CD4-positive, alpha-beta T cell (primary cell): ENCODE measurements at regions of chr17 and their contacts with region 1.

Region 1: DNA sequence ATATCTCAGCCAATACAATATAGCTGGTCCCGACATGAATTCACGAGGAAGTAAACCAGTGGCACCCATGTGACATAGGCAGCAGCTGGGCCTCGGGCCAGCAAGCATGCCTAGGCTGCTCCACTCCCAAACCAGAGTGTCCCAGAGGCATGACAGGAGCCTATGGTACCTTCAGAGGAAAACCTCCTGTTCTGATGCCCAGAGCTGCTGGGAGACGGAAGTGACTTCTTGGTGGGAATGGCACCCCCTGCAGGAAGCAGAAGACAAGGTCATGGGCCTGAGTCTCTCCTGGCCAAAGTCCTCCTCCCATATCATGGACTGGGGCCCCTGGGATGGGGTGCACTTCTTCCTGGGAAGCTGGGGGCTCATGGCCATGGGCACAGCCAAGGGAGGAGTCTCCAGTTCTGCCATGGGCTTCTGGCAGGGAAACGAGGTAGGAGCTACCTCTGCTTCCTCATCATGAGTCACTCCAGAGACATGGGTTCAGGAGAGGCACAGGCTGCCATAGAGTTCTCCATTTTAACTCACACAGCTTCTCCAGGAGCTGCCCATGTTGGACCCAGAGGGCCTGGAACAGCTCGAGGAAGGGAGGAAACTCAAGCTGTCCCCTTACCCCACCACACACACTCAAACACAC is 13.4 kb downstream of the FBF1 start:
- DNase-seq: peak in 1 of 14 experiments; percentile 29
- ATAC-seq: no peak
- H3K4me3 ChIP-seq: no peak overlapping the region
- H3K4me3 Mint-ChIP-seq: no peak overlapping the region
- H3K27ac ChIP-seq: no peak overlapping the region
- H3K27ac Mint-ChIP-seq: no peak overlapping the region
- H3K4me1 ChIP-seq: no peaks in the 10 kb centered on the region
- H3K4me1 Mint-ChIP-seq: no peaks in the 10 kb centered on the region
- H3K27me3 ChIP-seq: no peaks in the 10 kb centered on the region
- H3K27me3 Mint-ChIP-seq: no peaks in the 10 kb centered on the region
- CTCF ChIP-seq: peak; percentile 22

Region 2: DNA sequence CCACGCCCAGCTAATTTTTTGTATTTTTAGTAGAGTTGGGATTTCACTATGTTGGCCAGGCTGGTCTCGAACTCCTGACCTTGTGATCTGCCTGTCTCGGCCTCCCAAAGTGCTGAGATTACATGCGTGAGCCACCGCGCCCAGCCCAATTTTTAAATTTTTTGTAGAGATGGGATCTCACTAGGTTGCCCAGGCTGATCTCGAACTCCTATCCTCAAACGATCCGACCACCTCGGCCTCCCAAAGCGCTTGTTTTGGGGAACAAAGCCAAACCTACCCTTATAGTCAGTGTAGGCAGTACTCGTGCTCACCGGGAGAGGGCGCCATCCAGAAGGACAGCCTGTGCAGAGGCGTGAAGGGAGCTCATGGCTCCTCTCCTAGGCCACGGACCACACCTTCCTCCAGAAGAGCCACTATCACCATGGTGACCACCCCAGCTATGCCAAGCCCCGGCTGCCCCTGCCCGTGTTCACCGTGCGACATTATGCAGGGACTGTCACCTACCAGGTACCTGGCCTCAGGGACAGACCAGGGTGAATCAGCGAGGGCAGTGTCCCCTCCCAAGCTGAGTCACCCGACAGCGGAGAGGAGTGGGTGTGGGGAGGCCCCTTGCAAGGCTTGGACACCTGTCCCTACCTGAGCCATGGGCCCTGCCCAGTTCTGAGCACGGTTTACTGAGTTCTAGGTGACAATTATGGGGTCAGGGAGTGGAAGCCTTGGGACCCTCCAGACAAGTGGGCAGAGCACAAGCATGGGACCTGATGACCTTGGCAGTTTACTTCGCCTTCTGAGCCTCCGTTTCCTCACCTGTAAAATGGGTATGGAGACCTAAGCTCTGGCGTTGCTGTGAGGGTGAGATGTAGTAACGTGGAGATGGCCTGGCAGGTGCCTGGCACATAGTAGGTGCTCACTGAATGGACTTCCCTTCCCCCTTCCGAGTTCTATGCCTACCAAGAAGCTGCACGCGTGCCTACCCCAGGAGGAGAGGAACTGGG is 326.1 kb before region 1 on chr17:
- CTCF ChIA-PET with region 1: no interaction called
- POLR2A ChIA-PET with region 1: no interaction called
- intact Hi-C with region 1: no loop called
- DNase-seq: peak; percentile 37 to 72 (median 54)
- ATAC-seq: peak; percentile 81
- H3K4me3 ChIP-seq: no peak overlapping the region
- H3K4me3 Mint-ChIP-seq: no peak overlapping the region
- H3K27ac ChIP-seq: no peak overlapping the region
- H3K27ac Mint-ChIP-seq: no peak overlapping the region
- H3K4me1 ChIP-seq: peaks cover 4% of the 10 kb centered on the region
- H3K4me1 Mint-ChIP-seq: no peaks in the 10 kb centered on the region
- H3K27me3 ChIP-seq: no peaks in the 10 kb centered on the region
- H3K27me3 Mint-ChIP-seq: no peaks in the 10 kb centered on the region
- CTCF ChIP-seq: peak; percentile 64

Region 3: DNA sequence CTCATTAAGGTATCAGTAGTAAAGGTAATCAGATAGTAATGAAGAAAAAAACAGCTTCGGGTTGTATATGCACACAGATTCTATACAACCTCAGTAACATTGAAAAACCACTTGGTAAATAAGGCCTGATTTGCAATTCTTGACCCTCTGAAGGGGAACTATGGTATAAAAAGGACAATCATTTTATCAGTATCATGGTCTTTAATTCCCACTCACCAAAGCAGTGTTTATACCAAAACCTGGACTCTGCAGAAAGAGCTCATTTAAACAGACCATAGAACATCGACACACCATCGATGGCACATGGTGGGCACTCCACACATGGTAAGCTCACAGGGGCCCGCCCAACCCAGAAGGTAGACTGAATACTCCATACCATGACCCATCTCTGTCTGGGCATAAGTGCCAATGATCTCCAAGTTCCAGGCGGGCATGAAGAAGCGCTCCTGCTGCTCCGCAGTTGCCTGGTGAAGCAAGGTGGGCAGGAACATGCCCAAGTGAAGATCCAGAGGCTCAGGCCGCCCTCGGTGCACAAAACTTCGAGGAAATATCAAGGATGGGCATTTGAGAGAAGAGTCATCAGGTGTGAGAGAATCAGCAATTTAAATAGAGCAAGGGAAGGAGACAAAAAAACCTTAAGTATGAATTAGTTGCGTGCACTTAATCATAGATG is 32.6 kb after region 1 on chr17:
- CTCF ChIA-PET with region 1: no interaction called
- POLR2A ChIA-PET with region 1: no interaction called
- intact Hi-C with region 1: loop called in 1 of 2 experiments (anchors 5 kb)
- DNase-seq: no peak
- ATAC-seq: no peak
- H3K4me3 ChIP-seq: no peak overlapping the region
- H3K4me3 Mint-ChIP-seq: no peak overlapping the region
- H3K27ac ChIP-seq: no peak overlapping the region
- H3K27ac Mint-ChIP-seq: no peak overlapping the region
- H3K4me1 ChIP-seq: no peaks in the 10 kb centered on the region
- H3K4me1 Mint-ChIP-seq: peaks cover 18% of the 10 kb centered on the region
- H3K27me3 ChIP-seq: no peaks in the 10 kb centered on the region
- H3K27me3 Mint-ChIP-seq: no peaks in the 10 kb centered on the region
- CTCF ChIP-seq: no peak

Region 4: DNA sequence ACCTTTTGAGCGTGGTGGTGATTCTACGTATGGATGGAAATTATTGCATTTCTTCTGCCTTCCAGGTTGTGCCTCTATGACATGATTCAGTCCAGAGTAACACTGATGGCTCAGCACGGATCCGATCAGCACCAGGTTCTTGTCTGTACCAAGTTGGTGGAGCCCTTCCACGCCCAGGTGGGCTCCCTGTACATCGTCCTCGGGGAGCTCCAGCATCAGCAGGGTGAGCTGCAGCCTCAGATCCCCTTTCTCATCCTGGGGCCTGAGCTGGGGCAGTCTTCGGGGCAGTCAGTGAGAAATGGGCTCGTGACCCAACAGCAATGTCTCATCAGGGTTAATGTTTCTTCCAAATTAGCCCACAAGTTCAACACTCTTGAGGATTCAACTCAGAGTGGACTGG is 64.0 kb after region 1 on chr17:
- CTCF ChIA-PET with region 1: no interaction called
- POLR2A ChIA-PET with region 1: no interaction called
- intact Hi-C with region 1: loop called in 1 of 2 experiments (anchors 5 kb)
- DNase-seq: no peak
- ATAC-seq: no peak
- H3K4me3 ChIP-seq: no peak overlapping the region
- H3K4me3 Mint-ChIP-seq: no peak overlapping the region
- H3K27ac ChIP-seq: no peak overlapping the region
- H3K27ac Mint-ChIP-seq: no peak overlapping the region
- H3K4me1 ChIP-seq: peaks cover under 1% of the 10 kb centered on the region
- H3K4me1 Mint-ChIP-seq: peaks cover under 1% of the 10 kb centered on the region
- H3K27me3 ChIP-seq: no peaks in the 10 kb centered on the region
- H3K27me3 Mint-ChIP-seq: no peaks in the 10 kb centered on the region
- CTCF ChIP-seq: no peak